ENCODE measurements at regions of chr17 and their contacts with region 1.

Region 1: GRCh38 chr17:64773836-64774761 is 112.0 kb upstream of the SMURF2 start:
- DNase-seq: peak; percentile 90 to 96
- H3K4me3 ChIP-seq: peak overlapping the region; percentile 71
- H3K27ac ChIP-seq: peak overlapping the region; percentile 61
- H3K4me1 ChIP-seq: peaks cover 18% of the 10 kb centered on the region
- H3K27me3 ChIP-seq: no peaks in the 10 kb centered on the region
- CTCF ChIP-seq: peak; percentile 72

Region 2: GRCh38 chr17:64081802-64082799 is 692.0 kb before region 1 on chr17:
- CTCF ChIA-PET with region 1: no interaction called
- POLR2A ChIA-PET with region 1: no interaction called
- intact Hi-C with region 1: no loop called
- DNase-seq: peak; percentile 33 to 99
- H3K4me3 ChIP-seq: peak overlapping the region; percentile 38
- H3K27ac ChIP-seq: peak overlapping the region; percentile 99
- H3K4me1 ChIP-seq: peaks cover 77% of the 10 kb centered on the region
- H3K27me3 ChIP-seq: no peaks in the 10 kb centered on the region
- CTCF ChIP-seq: peak; percentile 20; the same call in 1 of the 2 replicates

Region 3: GRCh38 chr17:64506576-64507477 is 267.3 kb before region 1 on chr17 and contains the start of gene CEP95:
- CTCF ChIA-PET with region 1: no interaction called
- POLR2A ChIA-PET with region 1: interaction called, 17 read pairs
- intact Hi-C with region 1: no loop called
- DNase-seq: peak in 1 of 2 experiments; percentile 80
- H3K4me3 ChIP-seq: peak within 1 kb of the TSS; percentile 100
- H3K27ac ChIP-seq: peak within 1 kb of the TSS; percentile 98
- H3K4me1 ChIP-seq: peaks cover 30% of the 10 kb centered on the region
- H3K27me3 ChIP-seq: no peaks in the 10 kb centered on the region
- CTCF ChIP-seq: no peak
- total RNA-seq, gene CEP95: 56.0 and 57.2 TPM in 2 replicates

Region 4: DNA sequence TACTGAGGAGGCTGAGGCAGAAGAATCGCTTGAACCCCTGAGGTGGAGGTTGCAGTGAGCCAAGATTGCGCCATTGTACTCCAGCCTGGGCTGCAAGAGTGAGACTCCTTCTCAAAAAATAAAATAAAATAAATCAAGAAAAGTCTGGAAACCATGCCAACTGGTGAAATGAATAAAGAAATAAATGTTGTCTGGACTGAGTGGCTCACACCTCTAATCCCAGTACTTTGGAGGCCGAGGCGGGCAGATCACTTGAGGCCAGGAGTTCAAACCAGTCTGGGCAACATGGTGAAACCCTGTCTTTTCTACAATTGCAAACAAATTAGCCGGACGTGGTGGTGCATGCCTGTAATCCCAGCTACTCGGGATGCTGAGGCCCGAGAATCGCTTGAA is 145.9 kb after region 1 on chr17:
- CTCF ChIA-PET with region 1: no interaction called
- POLR2A ChIA-PET with region 1: no interaction called
- intact Hi-C with region 1: loop called (anchors 2 kb)
- DNase-seq: no peak
- H3K4me3 ChIP-seq: peak overlapping the region; percentile 62
- H3K27ac ChIP-seq: peak overlapping the region; percentile 56; the same call in 1 of the 2 replicates
- H3K4me1 ChIP-seq: peaks cover 8% of the 10 kb centered on the region
- H3K27me3 ChIP-seq: no peaks in the 10 kb centered on the region
- CTCF ChIP-seq: no peak

Region 5: GRCh38 chr17:64938925-64939474 is 164.9 kb after region 1 on chr17:
- CTCF ChIA-PET with region 1: no interaction called
- POLR2A ChIA-PET with region 1: no interaction called
- intact Hi-C with region 1: loop called (anchors 5 kb)
- DNase-seq: peak; percentile 55 to 70
- H3K4me3 ChIP-seq: no peak overlapping the region
- H3K27ac ChIP-seq: peak overlapping the region; percentile 89
- H3K4me1 ChIP-seq: peaks cover 51% of the 10 kb centered on the region
- H3K27me3 ChIP-seq: no peaks in the 10 kb centered on the region
- CTCF ChIP-seq: peak; percentile 75

Measured in PC-9 (cell line).